ENCODE measurements at regions of chr1 and their contacts with region 1.

Region 1: DNA sequence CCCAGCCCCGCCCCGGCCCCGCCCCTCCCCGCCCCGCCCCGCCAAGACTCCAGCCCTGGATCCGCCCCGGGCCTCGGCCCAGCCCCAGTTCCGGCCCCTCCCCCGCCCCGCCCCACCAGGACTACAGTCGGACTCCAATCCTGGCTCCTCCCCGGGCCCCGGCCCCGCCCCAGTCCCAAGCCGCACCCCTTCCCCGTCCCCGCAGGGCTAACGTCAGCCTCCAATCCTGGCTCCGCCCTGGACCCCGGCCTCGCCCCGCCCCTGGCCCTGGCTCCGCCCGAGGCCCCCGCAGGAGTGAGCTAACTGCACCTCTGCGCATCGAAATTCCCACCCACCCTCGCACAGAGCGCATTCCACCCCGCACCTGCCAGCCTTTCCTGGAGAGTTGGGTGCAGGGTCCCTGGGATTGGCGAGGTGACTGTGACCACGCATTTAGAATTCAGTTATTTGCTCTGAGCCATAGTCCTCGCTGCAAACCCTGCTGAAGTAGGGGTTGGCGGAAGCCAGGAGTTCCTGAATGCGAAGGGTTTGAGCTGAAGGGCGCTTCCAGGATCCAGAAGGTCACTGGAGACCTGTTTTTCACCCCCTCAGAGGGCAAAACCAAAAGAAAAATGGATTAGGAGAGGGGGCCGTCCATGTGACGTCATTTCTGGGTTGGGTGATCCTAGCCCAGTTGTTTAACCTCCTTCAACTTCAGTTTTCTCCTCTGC is 588 bp upstream of the IGSF8 start:
- DNase-seq: peak; percentile 100
- H3K4me3 ChIP-seq: peak overlapping the region; percentile 26 to 93 (median 54)
- H3K27ac ChIP-seq: peak overlapping the region; percentile 90 to 99 (median 93)
- H3K4me1 ChIP-seq: peaks cover 24 to 82% (median 50%) of the 10 kb centered on the region in 6 donors
- H3K27me3 ChIP-seq: no peaks in the 10 kb centered on the region
- CTCF ChIP-seq: peak in 1 of 11 experiments; percentile 25
- POLR2A ChIP-seq: peak in 1 of 3 donors; percentile 45

Region 2: DNA sequence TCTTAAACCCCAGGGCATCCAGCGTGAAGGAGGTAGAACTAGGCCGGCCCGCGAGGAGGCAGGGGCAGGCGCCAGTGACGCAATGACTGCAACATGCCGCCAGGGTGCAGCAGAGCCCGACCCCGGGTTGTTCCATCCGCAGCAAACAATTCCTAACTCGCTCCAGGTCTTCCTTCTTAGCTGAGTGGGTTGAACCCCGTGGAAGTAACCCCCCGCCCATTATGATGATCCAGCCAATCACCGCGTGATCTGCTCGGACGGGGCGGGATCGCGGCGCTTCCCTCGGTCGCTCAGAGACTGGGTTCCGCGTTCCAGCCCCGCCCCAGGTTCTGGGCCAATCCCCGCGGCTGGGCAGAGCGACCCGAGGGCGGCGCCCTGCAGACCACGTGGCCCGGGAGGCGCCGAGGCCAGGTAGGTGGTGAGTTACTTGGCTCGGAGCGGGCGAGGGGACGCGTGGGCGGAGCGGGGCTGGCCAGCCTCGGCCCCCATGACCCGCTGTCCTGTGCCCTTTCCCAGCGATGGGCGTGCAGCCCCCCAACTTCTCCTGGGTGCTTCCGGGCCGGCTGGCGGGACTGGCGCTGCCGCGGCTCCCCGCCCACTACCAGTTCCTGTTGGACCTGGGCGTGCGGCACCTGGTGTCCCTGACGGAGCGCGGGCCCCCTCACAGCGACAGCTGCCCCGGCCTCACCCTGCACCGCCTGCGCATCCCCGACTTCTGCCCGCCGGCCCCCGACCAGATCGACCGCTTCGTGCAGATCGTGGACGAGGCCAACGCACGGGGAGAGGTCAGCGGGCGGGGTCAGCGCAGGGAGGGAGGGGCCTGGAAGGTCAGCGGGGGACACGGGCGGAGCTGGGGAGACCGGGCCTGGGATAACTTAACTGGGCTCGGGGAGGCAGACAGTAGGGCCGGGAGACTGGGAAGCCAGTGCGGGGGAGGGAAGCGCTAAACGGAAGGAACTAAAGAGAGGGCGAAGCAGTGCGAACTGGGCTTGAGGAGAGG is 318.1 kb before region 1 on chr1 and contains the start of gene DUSP23:
- intact Hi-C with region 1: loop called (anchors 10 kb)
- DNase-seq: peak; percentile 99
- H3K4me3 ChIP-seq: peak within 1 kb of the TSS; percentile 78 to 99 (median 94)
- H3K27ac ChIP-seq: peak within 1 kb of the TSS; percentile 66 to 88 (median 80)
- H3K4me1 ChIP-seq: peaks cover 12 to 30% (median 21%) of the 10 kb centered on the region in 6 donors
- H3K27me3 ChIP-seq: no peaks in the 10 kb centered on the region
- CTCF ChIP-seq: peak; percentile 93 to 98 (median 95)
- POLR2A ChIP-seq: peak in 2 of 3 donors; percentile 5 to 39
- total RNA-seq, gene DUSP23: 23.1 to 76.3 (median 30.7) TPM

Region 3: DNA sequence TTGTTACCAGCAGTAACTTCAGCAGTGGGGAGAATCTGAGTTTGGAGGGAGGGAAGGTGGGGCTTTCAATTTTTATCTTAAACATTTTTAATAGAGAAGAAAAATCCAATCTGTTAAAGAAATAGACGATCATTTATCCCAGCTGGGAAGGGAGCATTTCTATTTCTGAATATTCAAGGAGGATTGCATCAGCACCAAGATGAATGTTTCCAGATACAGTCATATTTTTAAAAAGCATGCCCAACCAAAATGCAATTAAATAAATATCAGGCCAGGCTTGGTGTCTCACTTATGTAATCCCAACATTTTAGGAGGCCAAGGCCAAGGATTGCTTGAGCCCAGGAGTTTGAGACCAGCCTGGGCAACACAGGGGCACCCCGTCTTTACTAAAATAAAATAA is 50.7 kb after region 1 on chr1:
- intact Hi-C with region 1: no loop called
- DNase-seq: no peak
- H3K4me3 ChIP-seq: no peak overlapping the region
- H3K27ac ChIP-seq: no peak overlapping the region
- H3K4me1 ChIP-seq: peaks cover 0 to 4% (median 0%) of the 10 kb centered on the region in 6 donors
- H3K27me3 ChIP-seq: no peaks in the 10 kb centered on the region
- CTCF ChIP-seq: no peak
- POLR2A ChIP-seq: no peak

Region 4: DNA sequence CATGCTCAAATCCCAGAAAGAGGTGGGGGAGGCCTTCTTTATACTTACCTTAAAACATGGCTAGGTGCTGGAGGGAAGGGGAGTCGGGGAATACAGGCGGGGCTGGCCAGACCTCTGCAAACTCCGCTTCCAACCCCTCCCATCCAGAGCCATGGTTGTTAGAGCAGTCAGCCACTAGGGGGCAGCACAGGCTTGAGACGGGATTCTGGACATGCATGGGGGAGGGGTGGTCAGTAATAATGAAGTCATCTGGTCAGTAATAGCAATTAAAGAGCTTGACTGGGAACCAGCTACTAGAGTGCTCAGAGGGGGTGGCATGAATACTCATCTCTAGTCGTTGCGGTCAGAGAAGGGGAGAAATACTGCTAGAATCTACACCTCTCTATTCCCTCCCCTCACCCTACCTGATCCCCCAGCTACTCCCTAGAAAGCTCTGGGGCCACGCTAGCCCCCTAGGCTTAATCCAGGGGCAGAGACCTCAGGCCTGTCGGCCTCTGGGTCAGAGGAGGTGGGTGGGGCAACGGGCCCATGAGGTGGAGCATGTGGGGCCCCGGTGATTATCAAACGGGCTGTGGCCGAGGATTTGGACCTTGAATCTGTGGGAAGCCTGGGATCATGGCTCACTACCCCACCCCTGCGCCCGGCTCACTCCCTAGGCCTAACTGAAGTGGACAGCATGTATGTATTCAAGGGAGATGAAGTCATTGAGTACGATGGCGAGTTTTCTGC is 94.2 kb after region 1 on chr1:
- intact Hi-C with region 1: loop called (anchors 10 kb)
- DNase-seq: peak; percentile 93
- H3K4me3 ChIP-seq: no peak overlapping the region
- H3K27ac ChIP-seq: peak overlapping the region in 2 of 8 donors; percentile 14 to 28
- H3K4me1 ChIP-seq: peaks cover 0 to 21% (median 12%) of the 10 kb centered on the region in 6 donors
- H3K27me3 ChIP-seq: no peaks in the 10 kb centered on the region
- CTCF ChIP-seq: peak; percentile 87 to 96 (median 95)
- POLR2A ChIP-seq: no peak

Region 5: DNA sequence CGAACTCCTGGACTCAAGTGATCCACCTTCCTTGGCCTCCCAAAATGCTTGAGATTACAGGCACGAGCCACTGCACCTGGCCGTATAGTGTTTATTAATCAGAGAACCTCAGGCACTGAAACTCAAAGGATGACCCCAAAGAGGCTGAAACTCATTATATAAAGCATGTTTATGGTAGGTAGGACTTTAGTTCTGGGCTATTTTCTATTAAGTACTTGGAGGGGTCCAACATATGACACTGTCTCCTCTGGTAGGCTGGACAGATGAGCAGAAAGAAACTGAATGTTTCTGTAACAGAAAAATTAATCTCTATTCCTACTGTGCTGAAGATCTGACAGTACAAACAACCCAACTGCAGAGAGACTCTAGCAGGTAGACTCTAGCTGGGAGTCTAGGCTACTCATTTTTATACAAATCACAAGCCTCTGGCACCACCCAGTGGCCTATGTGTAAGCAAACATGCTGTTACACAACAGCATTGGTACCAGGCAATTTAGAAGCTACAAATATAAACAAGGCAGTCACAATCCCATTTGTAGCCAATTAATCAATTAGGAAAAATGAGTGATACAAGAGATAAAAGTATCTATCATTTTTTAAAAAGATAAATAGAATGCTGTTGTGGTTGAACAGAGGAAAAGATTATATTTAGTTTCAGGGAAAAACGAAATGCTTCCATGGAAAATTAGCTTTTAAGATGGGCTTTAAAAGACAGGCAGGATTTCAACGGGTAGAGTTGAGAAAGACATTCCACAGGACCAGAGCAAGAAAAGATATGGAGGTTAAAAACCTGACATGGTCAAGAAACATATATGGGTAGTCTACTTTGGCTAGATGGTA is 152.9 kb after region 1 on chr1:
- intact Hi-C with region 1: loop called (anchors 10 kb)
- DNase-seq: no peak
- H3K4me3 ChIP-seq: no peak overlapping the region
- H3K27ac ChIP-seq: peak overlapping the region in 1 of 8 donors; percentile 10
- H3K4me1 ChIP-seq: peaks cover 0 to 36% (median 10%) of the 10 kb centered on the region in 6 donors
- H3K27me3 ChIP-seq: no peaks in the 10 kb centered on the region
- CTCF ChIP-seq: peak; percentile 27 to 77 (median 66)
- POLR2A ChIP-seq: no peak

Region 6: DNA sequence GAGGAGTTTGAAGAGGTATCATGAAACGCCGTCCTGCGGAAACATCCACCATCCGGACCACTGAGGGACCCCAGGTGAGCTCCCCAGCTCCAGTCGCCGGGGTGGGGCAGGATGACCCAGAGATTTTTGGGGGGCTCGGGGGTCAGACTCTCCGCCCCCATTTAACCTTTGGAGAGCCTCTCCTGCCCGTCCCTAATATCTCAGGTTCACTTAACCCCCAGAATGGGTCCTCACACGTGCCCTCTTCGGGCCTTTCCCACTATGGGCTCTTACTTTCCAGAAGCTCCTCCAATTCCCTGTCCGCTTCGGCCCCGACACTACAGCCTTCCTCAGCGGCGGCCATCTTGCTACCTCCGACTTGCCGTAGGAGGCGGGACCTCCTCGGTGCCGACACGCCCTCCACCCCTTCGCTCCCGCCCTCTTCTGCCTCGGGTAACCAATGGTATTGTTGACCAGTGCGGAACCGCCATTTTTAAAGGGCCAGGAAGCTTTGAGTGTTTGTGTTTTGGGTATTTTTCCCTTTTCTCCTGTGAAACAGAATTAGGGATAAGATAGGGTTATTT is 185.9 kb after region 1 on chr1 and contains the start of gene PEX19:
- intact Hi-C with region 1: loop called (anchors 5 kb)
- DNase-seq: peak; percentile 97
- H3K4me3 ChIP-seq: peak within 1 kb of the TSS; percentile 65 to 97 (median 86)
- H3K27ac ChIP-seq: peak within 1 kb of the TSS; percentile 82 to 91 (median 86)
- H3K4me1 ChIP-seq: peaks cover 19 to 38% (median 28%) of the 10 kb centered on the region in 6 donors
- H3K27me3 ChIP-seq: no peaks in the 10 kb centered on the region
- CTCF ChIP-seq: peak in 2 of 11 experiments; percentile 15 to 16
- POLR2A ChIP-seq: peak in 2 of 3 donors; percentile 35 to 53
- total RNA-seq, gene PEX19: 47.1 to 63.8 (median 51.9) TPM